ENCODE measurements at regions of chr1 and their contacts with region 1.

Region 1: DNA sequence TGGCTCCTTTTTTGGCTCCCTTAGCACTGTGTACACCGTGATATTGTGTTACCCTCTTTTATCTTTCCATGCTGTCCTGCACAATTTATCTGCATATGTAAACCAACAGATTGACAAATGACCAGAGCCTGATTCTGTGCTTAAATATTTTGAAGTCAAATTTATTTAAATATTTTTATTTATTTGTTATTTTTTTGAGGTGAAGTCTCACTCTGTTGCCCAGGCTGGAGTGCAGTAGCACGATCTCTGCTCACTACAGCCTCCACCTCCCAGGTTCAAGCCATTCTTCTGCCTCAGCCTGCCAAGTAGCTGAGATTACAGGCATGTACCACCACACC is 12.8 kb downstream of the PMF1 start:
- DNase-seq: no peak
- ATAC-seq: no peak
- H3K4me3 ChIP-seq: no peak overlapping the region
- H3K27ac ChIP-seq: no peak overlapping the region
- H3K4me1 ChIP-seq: peaks cover 5% of the 10 kb centered on the region
- H3K27me3 ChIP-seq: no peaks in the 10 kb centered on the region
- CTCF ChIP-seq: no peak

Region 2: DNA sequence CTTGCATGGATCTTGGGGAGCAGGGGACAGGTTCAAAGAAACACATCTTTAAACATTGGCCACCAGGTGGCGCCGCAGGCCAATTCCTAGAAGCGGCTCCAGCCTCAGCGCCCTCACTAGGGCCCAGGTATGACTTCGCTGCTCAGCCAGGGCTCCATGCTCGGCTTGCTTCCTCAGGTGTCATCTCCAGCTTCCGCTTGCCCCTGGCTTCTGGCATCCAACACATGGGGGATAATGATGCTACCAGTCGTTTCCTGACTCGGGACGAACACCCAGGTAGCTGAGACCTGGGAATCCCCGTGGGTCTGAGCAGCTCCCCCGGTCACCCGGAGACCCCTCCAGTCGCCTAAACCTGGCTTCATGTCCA is 134.8 kb before region 1 on chr1:
- intact Hi-C with region 1: loop called (anchors 1 to 2 kb)
- DNase-seq: peak; percentile 85 to 92
- ATAC-seq: peak; percentile 88 to 96 (median 90)
- H3K4me3 ChIP-seq: no peak overlapping the region
- H3K27ac ChIP-seq: no peak overlapping the region
- H3K4me1 ChIP-seq: no peaks in the 10 kb centered on the region
- H3K27me3 ChIP-seq: no peaks in the 10 kb centered on the region
- CTCF ChIP-seq: peak; percentile 93

Region 3: GRCh38 chr1:156146020-156146768 is 79.5 kb before region 1 on chr1:
- intact Hi-C with region 1: loop called (anchors 1 to 2 kb)
- DNase-seq: peak; percentile 74 to 78
- ATAC-seq: peak; percentile 48 to 65 (median 60)
- H3K4me3 ChIP-seq: no peak overlapping the region
- H3K27ac ChIP-seq: no peak overlapping the region
- H3K4me1 ChIP-seq: peaks cover 7% of the 10 kb centered on the region
- H3K27me3 ChIP-seq: peaks cover 0 to 14% (median 3%) of the 10 kb centered on the region in 3 donors
- CTCF ChIP-seq: peak; percentile 60